Lower leg skin (tissue), 4 donors: ENCODE measurements at regions of chrX and their contacts with region 1.

Region 1: DNA sequence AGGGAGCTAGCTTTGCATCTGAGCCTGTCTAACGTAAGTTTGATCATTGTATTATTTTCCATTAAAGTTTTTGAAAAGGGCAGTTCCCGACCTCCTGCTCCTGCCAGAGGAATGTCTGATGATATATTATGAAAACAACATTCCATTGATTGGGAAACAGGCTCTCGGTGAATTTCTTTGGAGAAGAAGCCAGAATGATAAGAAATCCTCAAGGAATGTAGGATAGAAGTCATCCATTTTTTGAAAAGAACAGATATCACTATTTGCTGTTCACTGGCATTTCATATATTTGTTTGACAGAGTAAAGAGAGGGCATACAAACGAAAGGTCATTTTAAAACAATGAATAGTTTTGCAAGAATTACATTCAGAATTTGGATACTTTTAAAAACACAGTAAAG is 781.0 kb upstream of the HTR2C start:
- DNase-seq: no peak
- H3K4me3 ChIP-seq: no peak overlapping the region
- CTCF ChIP-seq: no peak
- POLR2A ChIP-seq: no peak

Region 2: DNA sequence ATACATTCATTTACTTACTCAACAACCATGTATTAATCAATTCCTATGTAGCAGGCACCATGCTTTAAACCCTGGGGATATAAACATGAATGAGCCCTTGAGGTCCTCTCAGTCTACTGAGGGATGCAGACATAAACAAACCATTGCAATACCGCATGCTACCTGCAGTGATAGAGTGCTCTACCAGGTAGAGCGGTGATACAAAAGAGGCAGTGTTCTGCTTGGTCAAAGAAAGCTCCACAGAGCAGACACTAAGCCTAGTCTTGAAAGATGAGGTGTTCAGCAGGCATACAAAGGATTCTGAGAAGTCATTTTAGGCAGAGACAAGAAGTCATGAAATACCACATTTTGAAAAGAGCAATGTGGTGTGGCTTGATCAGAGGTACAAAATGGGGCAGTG is 935.3 kb before region 1 on chrX:
- intact Hi-C with region 1: no loop called
- DNase-seq: no peak
- H3K4me3 ChIP-seq: no peak overlapping the region
- CTCF ChIP-seq: no peak
- POLR2A ChIP-seq: no peak

Region 3: DNA sequence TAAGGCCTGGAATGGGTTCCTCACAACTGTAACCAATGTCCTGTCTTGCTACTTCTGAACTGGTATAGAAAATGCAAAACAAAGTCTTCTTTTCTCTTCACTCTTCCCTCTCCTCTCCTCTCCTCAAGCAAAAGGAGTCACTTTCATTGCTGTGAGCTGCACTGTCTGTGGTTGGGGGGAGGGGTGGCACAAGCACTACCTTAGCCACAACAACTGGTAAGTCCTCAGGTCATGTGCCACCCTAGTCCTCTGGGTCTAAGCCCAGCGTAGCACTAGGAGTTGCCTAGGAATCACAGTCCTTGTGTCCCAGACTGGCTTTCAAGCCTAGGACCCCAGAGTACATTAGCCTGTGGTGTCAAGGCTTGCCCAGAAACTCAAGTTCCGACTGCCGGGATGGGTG is 102.9 kb before region 1 on chrX:
- intact Hi-C with region 1: loop called (anchors 5 kb)
- DNase-seq: no peak
- H3K4me3 ChIP-seq: no peak overlapping the region
- CTCF ChIP-seq: no peak
- POLR2A ChIP-seq: no peak